Right ventricle myocardium inferior (tissue), 1 donor: ENCODE measurements at regions of chrX and their contacts with region 1.

Region 1: DNA sequence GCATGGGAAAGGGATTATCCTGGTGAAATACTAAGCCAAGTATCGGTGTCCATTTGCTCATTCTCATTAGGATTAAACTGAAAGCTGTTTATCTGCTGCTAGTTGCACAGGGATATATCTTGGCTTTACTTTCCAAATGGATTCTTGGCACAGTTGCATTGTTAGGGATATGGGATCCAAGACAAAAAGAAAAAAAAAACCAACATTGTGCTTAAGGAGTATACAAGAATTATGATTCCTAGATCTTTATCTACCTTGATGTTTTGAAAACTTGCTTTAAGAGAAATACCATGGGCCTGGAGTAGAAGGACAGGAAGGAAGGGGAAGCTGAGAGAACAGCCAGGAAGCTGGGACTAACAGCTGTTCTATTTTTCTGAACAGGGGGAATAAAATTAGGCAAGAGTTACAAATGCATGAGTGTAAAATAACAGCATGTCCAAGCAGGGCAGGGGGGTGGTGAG is 107.6 kb downstream of the ATXN3L start:
- DNase-seq: no peak
- ATAC-seq: peak; percentile 72

Region 2: DNA sequence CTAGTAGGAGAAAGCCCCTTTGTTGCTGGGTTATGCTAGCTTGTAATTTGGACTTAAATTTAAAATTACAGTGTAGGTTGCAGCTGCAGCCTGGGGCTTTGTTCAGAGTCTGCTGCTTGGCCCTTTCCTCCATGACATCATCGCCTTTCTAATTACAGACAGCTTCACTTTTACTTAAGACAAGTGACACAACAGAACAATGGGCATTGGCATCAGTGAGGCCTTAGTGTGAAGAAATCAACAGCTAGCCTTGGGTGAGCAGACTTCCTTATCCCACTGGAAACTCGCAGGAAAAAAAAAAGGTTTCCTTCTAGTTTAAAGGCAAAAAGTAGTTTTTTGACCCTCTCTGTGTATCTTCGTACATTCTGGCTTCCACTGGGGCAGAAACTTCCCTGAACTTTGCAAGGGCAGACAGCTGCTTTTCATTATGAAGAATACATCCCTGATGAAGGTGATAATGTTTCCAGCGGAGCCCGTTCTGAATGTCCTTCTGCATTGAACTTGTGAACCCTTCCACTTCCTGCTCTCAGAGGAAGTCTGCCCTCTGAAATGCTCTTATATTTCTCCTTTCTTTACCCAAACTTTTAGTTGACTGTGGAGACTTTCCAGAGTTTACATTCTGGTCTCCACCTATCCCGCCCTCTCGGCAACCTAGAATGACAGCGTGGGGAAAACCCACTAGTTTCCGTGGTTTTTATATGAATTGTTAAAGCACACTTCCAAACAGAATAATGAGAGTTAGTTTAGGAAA is 44.6 kb before region 1 on chrX:
- intact Hi-C with region 1: loop called (anchors 5 kb)
- DNase-seq: peak; percentile 54
- ATAC-seq: peak; percentile 72

Region 3: DNA sequence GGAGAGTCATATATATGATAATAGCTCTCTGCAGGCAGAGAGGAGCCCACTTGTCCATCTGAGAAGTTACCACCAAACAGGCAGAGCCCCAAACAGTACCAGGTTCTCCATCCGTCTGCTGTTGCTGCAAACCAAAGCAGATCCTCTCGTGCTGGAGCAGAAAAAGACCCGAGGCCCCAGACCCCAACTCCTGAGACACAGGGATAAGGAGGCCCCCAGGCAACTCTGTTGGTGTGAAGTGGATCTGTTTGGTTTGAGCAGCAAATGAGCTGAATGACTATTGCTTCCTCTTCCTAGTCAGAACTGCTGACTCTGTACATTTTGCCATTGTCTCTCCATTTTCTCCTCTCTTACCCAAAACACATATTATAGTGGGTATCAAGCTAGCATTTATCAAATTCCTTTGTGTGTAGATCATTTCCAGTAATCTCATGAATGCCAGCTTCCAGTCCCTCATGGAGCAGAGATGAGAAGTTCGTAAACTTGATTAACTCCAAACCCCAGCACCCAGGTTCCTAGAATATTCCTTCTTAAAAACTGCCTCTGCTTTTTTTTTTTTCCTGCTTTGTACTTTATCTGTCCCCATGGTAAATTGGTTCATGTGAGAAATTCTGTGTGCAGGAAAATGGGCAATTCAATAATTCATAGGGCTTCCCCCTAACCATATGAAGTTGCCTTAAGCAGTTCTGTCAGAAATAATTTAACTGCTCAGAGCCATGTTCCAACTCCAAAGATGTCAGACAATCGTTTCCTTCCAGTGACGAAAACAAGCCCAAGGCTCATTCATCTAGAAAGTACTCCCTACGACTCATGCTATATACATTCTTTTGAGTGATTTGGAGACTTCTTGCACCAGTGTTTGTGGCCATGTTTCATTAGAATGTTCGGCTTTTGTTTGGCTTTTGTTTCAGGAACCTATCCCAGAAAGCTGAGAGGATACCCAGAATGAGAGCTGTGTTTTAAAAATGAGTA is 206.2 kb after region 1 on chrX:
- intact Hi-C with region 1: no loop called
- DNase-seq: no peak
- ATAC-seq: no peak